IMR-90 (cell line): ENCODE measurements at regions of chr16 and their contacts with region 1.

Region 1: GRCh38 chr16:62530426-62530825 is 494.2 kb upstream of the CDH8 start:
- DNase-seq: no peak
- ATAC-seq: no peak
- H3K4me3 ChIP-seq: no peak overlapping the region
- H3K27ac ChIP-seq: no peak overlapping the region
- H3K4me1 ChIP-seq: no peaks in the 10 kb centered on the region
- H3K27me3 ChIP-seq: no peaks in the 10 kb centered on the region
- CTCF ChIP-seq: no peak
- POLR2A ChIP-seq: no peak
- RAD21 ChIP-seq: no peak

Region 2: GRCh38 chr16:63830061-63830460 is 1299.6 kb after region 1 on chr16:
- CTCF ChIA-PET with region 1: no interaction called
- POLR2A ChIA-PET with region 1: no interaction called
- dilution Hi-C with region 1: no loop called
- in situ Hi-C with region 1: no loop called
- intact Hi-C with region 1: loop called (anchors 5 kb)
- DNase-seq: no peak
- ATAC-seq: no peak
- H3K4me3 ChIP-seq: no peak overlapping the region
- H3K27ac ChIP-seq: no peak overlapping the region
- H3K4me1 ChIP-seq: no peaks in the 10 kb centered on the region
- H3K27me3 ChIP-seq: no peaks in the 10 kb centered on the region
- CTCF ChIP-seq: no peak
- POLR2A ChIP-seq: no peak
- RAD21 ChIP-seq: no peak